ENCODE measurements at regions of chr21 and their contacts with region 1.

Region 1: GRCh38 chr21:33491373-33492102 is at the start of gene DNAJC28:
- DNase-seq: peak; percentile 97
- ATAC-seq: peak; percentile 98
- H3K4me3 Mint-ChIP-seq: peak within 1 kb of the TSS; percentile 92
- H3K27ac Mint-ChIP-seq: peak within 1 kb of the TSS; percentile 72
- H3K4me1 Mint-ChIP-seq: peaks cover 10% of the 10 kb centered on the region
- H3K27me3 Mint-ChIP-seq: no peaks in the 10 kb centered on the region
- CTCF ChIP-seq: no peak
- total RNA-seq, gene DNAJC28: 0.53 and 0.66 TPM in 2 replicates

Region 2: GRCh38 chr21:32392880-32393676 is 1098.5 kb before region 1 on chr21 and contains the start of gene URB1:
- CTCF ChIA-PET with region 1: no interaction called
- POLR2A ChIA-PET with region 1: no interaction called
- intact Hi-C with region 1: loop called (anchors 10 kb)
- DNase-seq: peak; percentile 97
- ATAC-seq: peak; percentile 97
- H3K4me3 Mint-ChIP-seq: peak within 1 kb of the TSS; percentile 87
- H3K27ac Mint-ChIP-seq: peak within 1 kb of the TSS; percentile 83
- H3K4me1 Mint-ChIP-seq: peaks cover 41% of the 10 kb centered on the region
- H3K27me3 Mint-ChIP-seq: peaks cover 6% of the 10 kb centered on the region
- CTCF ChIP-seq: no peak
- total RNA-seq, gene URB1: 18.1 and 22.2 TPM in 2 replicates

Region 3: DNA sequence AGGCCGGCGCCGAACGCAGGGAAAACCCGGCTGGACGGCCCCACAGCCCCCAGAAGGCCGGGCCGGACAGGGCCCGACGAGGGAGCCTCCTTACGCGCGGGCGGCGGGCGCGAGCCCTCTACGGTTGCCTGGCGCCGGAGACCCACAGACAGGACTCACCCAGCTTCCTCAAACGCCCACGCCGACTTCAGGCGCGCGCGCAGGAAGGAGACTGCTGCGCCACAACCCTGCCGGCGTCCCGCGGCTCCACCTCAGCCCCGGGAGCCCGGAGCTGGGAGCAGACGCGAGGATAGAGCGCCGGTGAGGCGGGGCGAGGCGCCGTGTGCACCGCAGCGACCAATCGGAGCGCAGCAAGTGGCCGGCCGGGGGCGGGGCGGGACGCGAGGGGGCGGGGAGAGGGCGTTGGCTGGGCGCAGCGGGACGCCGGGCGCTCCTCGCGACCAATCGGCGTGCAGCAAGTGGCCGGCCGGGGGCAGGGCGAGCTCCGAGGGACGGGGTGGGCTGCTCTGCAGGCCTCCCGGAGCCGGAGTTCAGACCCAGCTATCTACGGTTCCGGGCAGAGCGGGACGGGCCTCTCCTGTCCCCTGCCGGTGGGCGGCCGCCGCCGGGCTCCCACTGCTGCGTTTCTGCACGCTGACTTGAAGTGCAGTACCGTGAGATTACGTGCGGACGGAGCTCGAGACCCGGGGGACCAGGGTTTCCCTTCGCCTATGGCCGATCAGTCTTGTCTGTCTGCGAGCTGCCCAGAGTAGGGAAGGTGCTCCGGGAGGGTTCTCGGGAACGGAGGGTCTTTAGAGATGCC is 11.7 kb before region 1 on chr21 and contains the start of gene TMEM50B:
- CTCF ChIA-PET with region 1: interaction called, 13 read pairs
- POLR2A ChIA-PET with region 1: interaction called, 71 read pairs
- intact Hi-C with region 1: loop called (anchors 1 kb)
- DNase-seq: peak; percentile 88
- ATAC-seq: peak; percentile 88
- H3K4me3 Mint-ChIP-seq: peak within 1 kb of the TSS; percentile 92
- H3K27ac Mint-ChIP-seq: peak within 1 kb of the TSS; percentile 90
- H3K4me1 Mint-ChIP-seq: peaks cover 20% of the 10 kb centered on the region
- H3K27me3 Mint-ChIP-seq: no peaks in the 10 kb centered on the region
- CTCF ChIP-seq: no peak
- total RNA-seq, gene TMEM50B: 42.3 and 47.2 TPM in 2 replicates

Region 4: GRCh38 chr21:33588485-33589335 is 97.2 kb after region 1 on chr21 and contains the start of gene DONSON:
- CTCF ChIA-PET with region 1: interaction called, 3 read pairs
- POLR2A ChIA-PET with region 1: interaction called, 7 read pairs
- intact Hi-C with region 1: loop called (anchors 2 kb)
- DNase-seq: peak; percentile 94
- ATAC-seq: peak; percentile 95
- H3K4me3 Mint-ChIP-seq: peak within 1 kb of the TSS; percentile 90
- H3K27ac Mint-ChIP-seq: peak within 1 kb of the TSS; percentile 56
- H3K4me1 Mint-ChIP-seq: peaks cover 10% of the 10 kb centered on the region
- H3K27me3 Mint-ChIP-seq: no peaks in the 10 kb centered on the region
- CTCF ChIP-seq: no peak
- total RNA-seq, gene DONSON: 4.4 and 4.7 TPM in 2 replicates